ENCODE measurements at regions of chr7 and their contacts with region 1.

Region 1: GRCh38 chr7:85041605-85042216 is 145.1 kb downstream of the SEMA3D start:
- DNase-seq: peak; percentile 74
- H3K4me3 Mint-ChIP-seq: no peak overlapping the region
- H3K27ac Mint-ChIP-seq: no peak overlapping the region
- H3K4me1 Mint-ChIP-seq: no peaks in the 10 kb centered on the region
- H3K27me3 Mint-ChIP-seq: peaks cover 53% of the 10 kb centered on the region
- CTCF ChIP-seq: peak; percentile 71

Region 2: DNA sequence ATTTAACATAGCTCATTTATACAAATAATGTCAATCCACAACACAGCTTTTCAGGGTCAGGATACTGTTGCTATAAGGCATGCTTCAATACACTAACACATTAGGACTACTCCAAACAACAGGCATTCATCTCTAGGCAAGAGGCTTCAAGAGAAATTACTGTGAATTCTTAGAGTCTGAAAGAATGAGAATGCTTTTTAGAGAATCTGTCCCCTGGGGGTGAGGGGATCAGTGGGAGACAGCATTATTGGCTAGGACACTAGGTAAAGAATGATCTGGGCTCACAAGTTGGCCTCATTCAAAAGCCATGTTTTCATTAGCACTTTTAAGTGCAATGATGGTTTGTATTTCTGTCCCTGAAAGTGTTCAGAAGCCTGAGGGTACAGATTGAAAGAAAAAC is 12.6 kb after region 1 on chr7:
- CTCF ChIA-PET with region 1: interaction called, 10 read pairs
- POLR2A ChIA-PET with region 1: no interaction called
- intact Hi-C with region 1: no loop called
- DNase-seq: no peak
- H3K4me3 Mint-ChIP-seq: no peak overlapping the region
- H3K27ac Mint-ChIP-seq: no peak overlapping the region
- H3K4me1 Mint-ChIP-seq: no peaks in the 10 kb centered on the region
- H3K27me3 Mint-ChIP-seq: peaks cover 76% of the 10 kb centered on the region
- CTCF ChIP-seq: no peak

Region 3: GRCh38 chr7:85464042-85464651 is 422.4 kb after region 1 on chr7:
- CTCF ChIA-PET with region 1: interaction called, 5 read pairs
- POLR2A ChIA-PET with region 1: no interaction called
- intact Hi-C with region 1: loop called (anchors 5 kb)
- DNase-seq: no peak
- H3K4me3 Mint-ChIP-seq: peak overlapping the region; percentile 30
- H3K27ac Mint-ChIP-seq: no peak overlapping the region
- H3K4me1 Mint-ChIP-seq: no peaks in the 10 kb centered on the region
- H3K27me3 Mint-ChIP-seq: peaks cover 67% of the 10 kb centered on the region
- CTCF ChIP-seq: no peak

Region 4: GRCh38 chr7:85750454-85750949 is 708.8 kb after region 1 on chr7:
- CTCF ChIA-PET with region 1: interaction called, 14 read pairs
- POLR2A ChIA-PET with region 1: no interaction called
- intact Hi-C with region 1: loop called (anchors 2 kb)
- DNase-seq: peak; percentile 53
- H3K4me3 Mint-ChIP-seq: no peak overlapping the region
- H3K27ac Mint-ChIP-seq: no peak overlapping the region
- H3K4me1 Mint-ChIP-seq: no peaks in the 10 kb centered on the region
- H3K27me3 Mint-ChIP-seq: peaks cover 72% of the 10 kb centered on the region
- CTCF ChIP-seq: peak; percentile 75

Region 5: GRCh38 chr7:85851571-85852193 is 810.0 kb after region 1 on chr7:
- CTCF ChIA-PET with region 1: interaction called, 17 read pairs
- POLR2A ChIA-PET with region 1: no interaction called
- intact Hi-C with region 1: loop called (anchors 2 kb)
- DNase-seq: peak; percentile 17
- H3K4me3 Mint-ChIP-seq: no peak overlapping the region
- H3K27ac Mint-ChIP-seq: no peak overlapping the region
- H3K4me1 Mint-ChIP-seq: no peaks in the 10 kb centered on the region
- H3K27me3 Mint-ChIP-seq: peaks cover 80% of the 10 kb centered on the region
- CTCF ChIP-seq: peak; percentile 40